PC-3 (cell line): ENCODE measurements at regions of chr15 and their contacts with region 1.

Region 1: DNA sequence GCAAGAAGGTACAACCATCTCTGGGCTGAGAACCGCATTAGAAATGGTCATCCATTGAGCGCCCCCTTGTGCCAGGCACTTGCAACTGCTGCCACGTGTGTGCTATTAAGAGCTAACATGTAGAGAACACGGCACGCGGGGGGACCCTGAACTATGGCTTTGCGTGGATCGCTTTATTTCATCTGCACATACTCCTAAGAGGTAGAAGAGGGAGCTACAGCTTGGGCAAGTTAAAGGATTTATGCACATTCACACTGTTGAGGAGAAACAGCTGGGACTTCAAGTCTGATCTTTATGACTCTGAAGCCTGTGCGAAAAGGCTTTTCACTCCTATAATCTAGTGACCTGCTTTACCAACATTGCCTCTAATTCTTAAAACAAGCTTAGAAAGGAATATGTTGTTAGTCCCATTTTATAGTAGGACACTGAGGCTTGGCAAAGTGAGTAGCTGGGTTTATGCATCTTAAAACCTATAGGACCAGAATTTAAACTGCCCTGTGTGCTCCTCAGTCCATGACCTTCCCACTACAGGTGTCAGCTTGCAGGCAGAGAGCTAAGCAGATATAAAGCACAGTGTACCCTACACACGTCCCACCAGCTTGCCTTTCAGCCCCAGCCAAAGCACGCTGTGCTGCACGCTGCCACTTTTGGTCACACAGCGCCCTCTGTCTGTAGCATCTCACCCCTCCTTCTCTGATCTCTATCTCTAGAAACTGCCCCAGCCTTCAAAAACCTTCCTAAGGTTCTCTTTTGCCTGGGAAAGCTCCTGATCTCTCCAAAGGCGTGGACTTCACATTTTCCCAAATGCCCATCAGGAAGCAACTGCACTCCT is 57.8 kb downstream of the STARD5 start:
- DNase-seq: peak; percentile 81
- ATAC-seq: peak; percentile 97
- H3K4me3 ChIP-seq: peak overlapping the region; percentile 40; the same call in 1 of the 2 replicates
- H3K27ac ChIP-seq: no peak overlapping the region
- H3K4me1 ChIP-seq: peaks cover 5% of the 10 kb centered on the region
- H3K27me3 ChIP-seq: peaks cover 11% of the 10 kb centered on the region
- CTCF ChIP-seq: peak; percentile 74

Region 2: DNA sequence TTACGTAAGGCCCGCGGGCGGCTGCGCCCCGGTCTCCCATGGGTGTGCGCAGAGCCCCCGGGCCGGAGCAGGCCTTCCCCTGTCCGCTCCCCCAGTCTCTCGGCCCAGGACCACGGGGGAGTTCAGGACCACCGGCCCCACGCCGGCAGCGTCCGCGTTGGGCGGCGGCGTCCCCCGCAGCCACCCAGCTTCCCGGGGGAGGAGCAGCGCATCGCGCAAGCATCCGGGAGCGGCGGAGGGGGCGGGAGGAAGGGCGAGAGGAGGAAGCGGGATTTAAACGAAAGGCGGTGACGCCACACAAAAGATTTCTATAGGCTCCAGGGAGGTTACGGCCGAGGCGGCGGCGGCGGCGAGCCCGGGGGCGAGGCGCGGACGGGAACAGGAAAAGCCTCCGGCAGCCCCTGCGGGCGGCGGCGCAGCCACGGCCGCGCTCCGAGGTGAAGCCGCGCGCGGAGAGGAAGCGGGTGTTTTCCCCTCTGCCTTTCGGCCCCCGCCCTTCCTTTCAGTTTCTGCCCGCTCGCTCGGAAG is 265.5 kb before region 1 on chr15 and contains the start of gene TLNRD1:
- CTCF ChIA-PET with region 1: no interaction called
- POLR2A ChIA-PET with region 1: interaction called, 11 read pairs
- intact Hi-C with region 1: loop called (anchors 10 kb)
- DNase-seq: peak; percentile 88
- ATAC-seq: peak; percentile 64
- H3K4me3 ChIP-seq: peak within 1 kb of the TSS; percentile 89
- H3K27ac ChIP-seq: peak within 1 kb of the TSS; percentile 74
- H3K4me1 ChIP-seq: peaks cover 40% of the 10 kb centered on the region
- H3K27me3 ChIP-seq: no peaks in the 10 kb centered on the region
- CTCF ChIP-seq: no peak
- total RNA-seq, gene TLNRD1: 17.8 and 29.9 TPM in 2 replicates

Region 3: DNA sequence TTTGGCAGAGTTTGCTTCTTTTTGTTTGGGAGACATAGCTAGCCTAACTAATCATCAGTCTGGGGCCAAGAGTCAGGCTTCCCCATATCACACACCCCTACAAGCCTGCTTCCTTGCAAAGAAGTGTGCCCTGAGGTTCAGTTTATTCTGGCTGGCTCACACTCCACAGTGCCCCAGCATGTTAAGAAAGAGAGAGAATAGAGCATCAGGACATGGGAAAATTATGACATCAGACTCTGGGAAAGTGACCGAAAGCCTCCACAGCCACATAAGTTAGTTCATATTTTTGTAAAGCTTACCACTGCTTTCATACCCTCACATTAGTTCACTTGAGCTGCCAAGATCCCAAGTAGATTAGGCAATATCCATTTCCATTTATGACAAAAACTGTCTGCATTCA is 195.0 kb before region 1 on chr15:
- CTCF ChIA-PET with region 1: no interaction called
- POLR2A ChIA-PET with region 1: no interaction called
- intact Hi-C with region 1: no loop called
- DNase-seq: no peak
- ATAC-seq: no peak
- H3K4me3 ChIP-seq: no peak overlapping the region
- H3K27ac ChIP-seq: no peak overlapping the region
- H3K4me1 ChIP-seq: no peaks in the 10 kb centered on the region
- H3K27me3 ChIP-seq: no peaks in the 10 kb centered on the region
- CTCF ChIP-seq: no peak

Region 4: GRCh38 chr15:81106560-81106959 is 159.6 kb before region 1 on chr15:
- CTCF ChIA-PET with region 1: interaction called, 15 read pairs
- POLR2A ChIA-PET with region 1: no interaction called
- intact Hi-C with region 1: loop called (anchors 1 kb)
- DNase-seq: peak; percentile 78
- ATAC-seq: peak; percentile 71
- H3K4me3 ChIP-seq: no peak overlapping the region
- H3K27ac ChIP-seq: no peak overlapping the region
- H3K4me1 ChIP-seq: peaks cover 7% of the 10 kb centered on the region; the same call in 1 of the 2 replicates
- H3K27me3 ChIP-seq: peaks cover 11% of the 10 kb centered on the region
- CTCF ChIP-seq: peak; percentile 78

Region 5: DNA sequence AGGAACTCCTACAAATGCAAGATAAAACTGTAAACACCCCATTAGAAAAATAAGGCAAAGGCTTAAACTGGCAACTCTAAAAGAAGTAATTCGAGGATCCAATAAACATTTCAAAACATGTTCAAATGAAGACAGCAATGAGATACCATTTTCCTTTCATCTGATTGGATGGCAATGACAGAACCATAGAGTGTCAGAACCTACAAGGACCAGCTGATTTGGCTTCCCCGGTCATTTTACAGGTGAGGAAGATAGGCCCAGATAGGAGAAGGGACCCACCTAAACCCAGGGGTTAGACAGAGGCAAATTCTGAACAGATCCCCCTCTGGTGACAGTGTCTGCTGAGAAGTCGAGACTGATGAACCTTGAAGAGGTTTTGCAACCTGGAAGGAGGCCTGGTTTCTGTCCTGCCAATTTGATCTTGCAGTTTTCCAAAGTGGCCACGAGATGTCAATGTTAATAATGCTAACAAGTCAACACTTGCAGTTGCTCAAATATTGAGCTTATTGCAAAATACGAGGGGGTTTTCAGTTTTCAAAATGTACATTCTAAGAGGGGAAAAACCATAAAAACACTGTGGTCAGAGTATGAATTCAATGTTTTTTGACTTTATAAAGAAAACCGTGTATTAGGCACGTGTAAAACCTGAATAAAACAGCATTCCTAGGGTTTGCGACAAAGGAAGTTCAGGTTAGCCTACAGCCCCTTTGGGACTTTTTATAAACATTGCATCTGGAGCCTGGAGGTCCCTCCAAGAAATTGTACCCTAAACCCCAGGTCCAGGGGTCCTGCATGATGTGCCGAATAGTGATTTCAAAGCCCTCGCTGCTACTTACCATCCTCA is 110.6 kb before region 1 on chr15:
- CTCF ChIA-PET with region 1: interaction called, 40 read pairs
- POLR2A ChIA-PET with region 1: no interaction called
- intact Hi-C with region 1: loop called (anchors 1 kb)
- DNase-seq: peak; percentile 62
- ATAC-seq: peak; percentile 49
- H3K4me3 ChIP-seq: no peak overlapping the region
- H3K27ac ChIP-seq: no peak overlapping the region
- H3K4me1 ChIP-seq: no peaks in the 10 kb centered on the region
- H3K27me3 ChIP-seq: no peaks in the 10 kb centered on the region
- CTCF ChIP-seq: peak; percentile 76